Calu3 (cell line): ENCODE measurements at regions of chrX and their contacts with region 1.

Region 1: DNA sequence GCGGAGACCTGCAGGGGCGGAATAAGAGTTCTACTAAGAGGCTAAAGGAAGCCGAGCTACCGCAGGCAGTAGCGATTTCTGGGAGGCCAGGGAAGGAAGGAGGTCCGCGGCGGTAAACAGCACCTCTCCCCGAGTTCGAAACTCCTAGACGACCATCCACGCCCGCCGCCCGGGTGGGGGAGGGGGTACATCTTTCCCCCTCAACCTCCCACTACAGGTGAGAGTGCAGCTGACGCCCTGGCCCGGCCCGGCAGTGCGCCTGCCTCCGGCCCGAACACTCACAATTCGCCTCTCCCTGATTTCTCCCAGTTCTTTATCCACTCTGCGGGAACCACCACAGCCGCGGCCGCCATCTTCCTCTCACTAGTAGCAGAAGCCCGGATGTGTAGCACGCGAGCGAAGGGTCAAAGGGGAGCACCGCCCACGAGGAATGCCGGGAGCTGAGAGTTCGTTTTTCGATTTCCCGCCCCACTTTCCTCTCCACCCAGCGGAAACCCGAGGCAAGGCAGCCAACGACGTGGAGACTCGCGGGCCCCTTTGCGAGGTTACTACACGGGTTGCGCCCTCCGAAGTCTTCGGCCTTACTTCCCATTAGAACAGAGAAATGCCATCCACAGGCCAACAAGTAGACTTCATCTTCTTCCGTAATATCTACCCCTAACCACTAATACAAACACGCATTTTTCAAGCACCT is at the start of gene THOC2:
- DNase-seq: peak; percentile 86
- H3K4me3 Mint-ChIP-seq: peak within 1 kb of the TSS; percentile 92
- H3K27ac Mint-ChIP-seq: peak within 1 kb of the TSS; percentile 96
- H3K4me1 Mint-ChIP-seq: no peaks in the 10 kb centered on the region
- H3K27me3 Mint-ChIP-seq: no peaks in the 10 kb centered on the region
- CTCF ChIP-seq: no peak
- total RNA-seq, gene THOC2: 107 and 112 TPM in 2 replicates

Region 2: DNA sequence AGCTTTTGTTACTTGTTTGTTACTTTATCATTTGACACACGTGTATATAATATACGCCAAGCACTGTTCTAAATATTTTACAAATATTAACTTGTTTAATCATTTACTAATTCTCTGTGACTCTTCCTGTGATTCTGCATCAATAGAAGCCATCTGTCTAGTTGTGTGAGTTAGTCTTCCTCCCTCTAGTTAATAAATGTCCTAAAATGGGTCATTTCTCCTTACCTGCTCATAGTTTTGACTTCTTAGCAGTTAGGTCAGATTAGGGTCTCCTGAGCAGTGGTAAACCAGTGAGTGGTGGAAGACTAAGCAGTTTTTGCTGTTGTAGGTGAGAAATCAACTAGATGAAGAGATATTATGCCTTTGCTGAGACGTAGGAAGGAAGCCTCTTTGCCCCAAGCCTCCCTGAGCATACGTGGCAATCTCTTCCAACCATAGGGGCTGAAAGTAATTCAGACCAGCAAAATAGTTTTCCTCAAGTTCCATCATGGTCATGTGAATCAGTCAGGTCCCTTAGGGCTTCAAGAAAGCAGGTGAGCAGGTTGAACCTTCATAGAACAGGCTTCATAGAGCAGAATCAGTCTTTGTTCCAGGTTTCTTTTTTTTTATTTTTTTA is 38.7 kb after region 1 on chrX:
- CTCF ChIA-PET with region 1: no interaction called
- intact Hi-C with region 1: loop called (anchors 2 kb)
- DNase-seq: peak; percentile 8
- H3K4me3 Mint-ChIP-seq: peak overlapping the region; percentile 54
- H3K27ac Mint-ChIP-seq: peak overlapping the region; percentile 96
- H3K4me1 Mint-ChIP-seq: peaks cover 40% of the 10 kb centered on the region
- H3K27me3 Mint-ChIP-seq: no peaks in the 10 kb centered on the region
- CTCF ChIP-seq: no peak